Endothelial cell of umbilical vein (primary cell): ENCODE measurements at regions of chr2 and their contacts with region 1.

Region 1: DNA sequence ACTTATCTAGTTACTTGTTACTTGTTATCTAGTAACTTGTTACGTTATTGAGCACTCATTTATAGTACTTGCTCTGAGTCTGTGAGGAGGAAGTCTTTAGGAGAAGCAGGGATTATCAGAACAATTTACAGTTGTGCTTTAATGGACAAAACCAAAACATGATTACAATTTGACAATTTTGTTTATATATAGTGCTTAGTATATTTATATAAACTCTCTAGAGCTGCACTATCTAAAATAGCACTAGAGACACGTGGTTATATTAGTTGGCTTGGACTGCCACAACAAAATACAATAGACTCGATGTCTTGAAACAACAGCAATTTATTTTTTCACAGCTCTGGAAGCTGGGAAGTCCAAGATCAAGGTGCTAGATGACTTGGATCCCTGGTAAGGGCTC is 78.4 kb downstream of the BMPR2 start:
- DNase-seq: no peak
- H3K4me3 ChIP-seq: no peak overlapping the region
- H3K27ac ChIP-seq: no peak overlapping the region
- H3K4me1 ChIP-seq: no peaks in the 10 kb centered on the region
- H3K27me3 ChIP-seq: no peaks in the 10 kb centered on the region
- CTCF ChIP-seq: no peak
- POLR2A ChIP-seq: no peak

Region 2: GRCh38 chr2:200662738-200663137 is 1791.8 kb before region 1 on chr2:
- CTCF ChIA-PET with region 1: no interaction called
- POLR2A ChIA-PET with region 1: no interaction called
- dilution Hi-C with region 1: no loop called
- intact Hi-C with region 1: no loop called
- DNase-seq: no peak
- H3K4me3 ChIP-seq: no peak overlapping the region
- H3K27ac ChIP-seq: no peak overlapping the region
- H3K4me1 ChIP-seq: no peaks in the 10 kb centered on the region
- H3K27me3 ChIP-seq: peaks cover 3 to 16% of the 10 kb centered on the region in 2 experiments
- CTCF ChIP-seq: no peak
- POLR2A ChIP-seq: no peak

Region 3: GRCh38 chr2:201194097-201194496 is 1260.4 kb before region 1 on chr2:
- CTCF ChIA-PET with region 1: no interaction called
- POLR2A ChIA-PET with region 1: no interaction called
- dilution Hi-C with region 1: no loop called
- intact Hi-C with region 1: no loop called
- DNase-seq: no peak
- H3K4me3 ChIP-seq: no peak overlapping the region
- H3K27ac ChIP-seq: no peak overlapping the region
- H3K4me1 ChIP-seq: peaks cover 35% of the 10 kb centered on the region
- H3K27me3 ChIP-seq: no peaks in the 10 kb centered on the region
- CTCF ChIP-seq: no peak
- POLR2A ChIP-seq: no peak

Region 4: GRCh38 chr2:201807452-201807999 is 647.0 kb before region 1 on chr2:
- CTCF ChIA-PET with region 1: no interaction called
- POLR2A ChIA-PET with region 1: interaction called, 14 read pairs
- dilution Hi-C with region 1: no loop called
- intact Hi-C with region 1: no loop called
- DNase-seq: no peak
- H3K4me3 ChIP-seq: no peak overlapping the region
- H3K27ac ChIP-seq: no peak overlapping the region
- H3K4me1 ChIP-seq: no peaks in the 10 kb centered on the region
- H3K27me3 ChIP-seq: peaks cover 27 to 31% of the 10 kb centered on the region in 2 experiments
- CTCF ChIP-seq: no peak
- POLR2A ChIP-seq: no peak

Region 5: GRCh38 chr2:202624133-202624532 is 169.6 kb after region 1 on chr2:
- CTCF ChIA-PET with region 1: no interaction called
- POLR2A ChIA-PET with region 1: no interaction called
- dilution Hi-C with region 1: no loop called
- intact Hi-C with region 1: no loop called
- DNase-seq: no peak
- H3K4me3 ChIP-seq: no peak overlapping the region
- H3K27ac ChIP-seq: no peak overlapping the region
- H3K4me1 ChIP-seq: no peaks in the 10 kb centered on the region
- H3K27me3 ChIP-seq: no peaks in the 10 kb centered on the region
- CTCF ChIP-seq: no peak
- POLR2A ChIP-seq: no peak